Activated T-helper 2 cell treated with anti-CD3 and anti-CD28 coated beads, Interferon-gamma antibody, Interleukin-2, Interleukin-4, amounts not matched to agents 10 μg/mL and 5 μg/mL and 100 μg/mL, durations not matched to agents 14 hours and 24 hours and 36 hours (primary cell): ENCODE measurements at regions of chr5 and their contacts with region 1.

Region 1: DNA sequence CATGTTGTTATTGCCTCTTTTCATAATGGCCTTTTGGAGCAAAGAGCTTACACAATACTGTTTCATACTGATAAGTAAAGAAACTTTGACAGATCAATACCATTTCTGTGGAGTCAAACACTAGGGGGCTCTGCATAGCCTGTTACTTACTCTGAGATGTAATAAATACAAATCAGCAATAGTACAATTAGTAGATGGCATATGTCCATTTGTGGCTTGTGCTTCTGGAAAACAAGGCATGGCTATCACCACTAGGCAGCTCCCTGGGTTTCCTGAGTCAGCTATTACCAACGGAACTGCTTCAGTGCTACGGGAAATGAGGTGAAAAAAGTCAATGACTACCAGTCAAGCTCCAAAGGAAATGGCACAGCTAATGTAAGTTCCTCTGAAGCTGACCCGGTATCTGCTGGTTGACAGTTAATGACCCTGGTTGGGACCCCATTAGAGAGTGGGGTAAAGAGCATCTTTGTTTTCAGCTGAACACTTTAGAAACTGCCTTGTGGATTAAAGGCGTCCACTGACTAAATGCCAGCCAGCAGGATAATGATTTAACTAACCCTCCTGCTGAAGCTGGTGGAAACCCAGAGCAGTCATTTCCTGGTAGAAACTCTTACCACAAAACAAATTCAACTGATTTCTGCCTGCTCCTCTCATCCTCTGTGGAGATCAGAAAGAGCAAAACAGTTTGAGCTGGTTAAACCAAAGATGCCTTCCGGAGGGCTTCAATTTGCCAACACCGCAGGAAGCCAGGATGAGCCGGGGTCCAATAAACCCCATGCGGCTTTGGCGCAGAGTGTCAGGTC is 69.0 kb upstream of the FAM169A start:
- DNase-seq: peak; percentile 11
- H3K4me3 Mint-ChIP-seq: peak overlapping the region; percentile 33
- H3K27ac Mint-ChIP-seq: peak overlapping the region; percentile 48
- H3K4me1 Mint-ChIP-seq: peaks cover 31% of the 10 kb centered on the region
- H3K27me3 Mint-ChIP-seq: peaks cover 25% of the 10 kb centered on the region

Region 2: DNA sequence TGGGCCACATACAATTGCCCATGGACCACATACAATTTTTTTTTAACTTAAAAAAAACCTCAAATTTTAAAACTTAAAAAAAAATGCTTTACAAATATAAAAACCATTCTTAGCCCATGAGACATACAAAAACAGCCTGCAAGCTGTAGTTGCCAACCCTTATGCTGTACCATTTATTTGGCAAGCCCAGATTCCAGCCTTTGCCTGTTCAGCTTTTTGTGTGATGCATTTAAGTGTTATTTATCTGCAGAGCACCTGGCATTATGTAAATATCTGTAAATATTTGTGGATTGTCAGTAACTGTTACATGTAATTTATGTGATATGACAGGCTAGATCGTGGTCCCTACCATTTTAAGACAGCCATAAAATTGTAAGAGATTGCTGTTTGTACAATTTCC is 217.6 kb before region 1 on chr5:
- intact Hi-C with region 1: no loop called
- DNase-seq: no peak
- H3K4me3 Mint-ChIP-seq: no peak overlapping the region
- H3K27ac Mint-ChIP-seq: no peak overlapping the region
- H3K4me1 Mint-ChIP-seq: no peaks in the 10 kb centered on the region
- H3K27me3 Mint-ChIP-seq: no peaks in the 10 kb centered on the region

Region 3: DNA sequence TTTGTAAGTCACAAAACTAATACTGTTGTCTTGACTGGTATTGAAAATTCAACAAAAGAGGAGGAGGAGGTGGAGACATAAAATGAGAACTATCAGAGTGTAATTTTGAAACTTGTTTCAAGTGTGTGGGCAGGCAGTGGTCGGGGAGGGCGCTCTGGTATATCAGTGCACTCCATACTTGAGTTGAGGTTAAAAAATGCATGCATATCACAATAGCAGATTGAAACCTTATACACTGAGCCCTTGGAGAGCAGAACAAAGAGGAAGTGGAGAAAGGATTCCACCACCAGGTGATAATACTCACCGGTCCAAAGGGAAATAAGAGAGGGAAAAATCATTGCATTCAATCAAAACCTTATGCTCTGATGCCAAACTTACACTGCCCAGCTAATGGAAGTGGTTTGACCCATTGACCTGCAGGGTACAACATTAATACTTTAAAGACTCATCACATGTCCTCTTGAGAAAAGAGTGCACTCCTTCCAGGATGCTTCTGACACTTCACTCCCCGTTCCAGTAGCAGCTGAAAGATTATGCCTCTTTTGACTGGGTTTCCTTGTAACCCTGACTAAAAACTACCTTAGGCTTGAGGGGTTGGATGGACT is 10.5 kb after region 1 on chr5:
- intact Hi-C with region 1: loop called (anchors 1 kb)
- DNase-seq: no peak
- H3K4me3 Mint-ChIP-seq: no peak overlapping the region
- H3K27ac Mint-ChIP-seq: no peak overlapping the region
- H3K4me1 Mint-ChIP-seq: peaks cover 8% of the 10 kb centered on the region
- H3K27me3 Mint-ChIP-seq: peaks cover 62% of the 10 kb centered on the region

Region 4: GRCh38 chr5:74963407-74963806 is 28.3 kb after region 1 on chr5:
- intact Hi-C with region 1: no loop called
- DNase-seq: no peak
- H3K4me3 Mint-ChIP-seq: no peak overlapping the region
- H3K27ac Mint-ChIP-seq: no peak overlapping the region
- H3K4me1 Mint-ChIP-seq: no peaks in the 10 kb centered on the region
- H3K27me3 Mint-ChIP-seq: peaks cover 26% of the 10 kb centered on the region

Region 5: DNA sequence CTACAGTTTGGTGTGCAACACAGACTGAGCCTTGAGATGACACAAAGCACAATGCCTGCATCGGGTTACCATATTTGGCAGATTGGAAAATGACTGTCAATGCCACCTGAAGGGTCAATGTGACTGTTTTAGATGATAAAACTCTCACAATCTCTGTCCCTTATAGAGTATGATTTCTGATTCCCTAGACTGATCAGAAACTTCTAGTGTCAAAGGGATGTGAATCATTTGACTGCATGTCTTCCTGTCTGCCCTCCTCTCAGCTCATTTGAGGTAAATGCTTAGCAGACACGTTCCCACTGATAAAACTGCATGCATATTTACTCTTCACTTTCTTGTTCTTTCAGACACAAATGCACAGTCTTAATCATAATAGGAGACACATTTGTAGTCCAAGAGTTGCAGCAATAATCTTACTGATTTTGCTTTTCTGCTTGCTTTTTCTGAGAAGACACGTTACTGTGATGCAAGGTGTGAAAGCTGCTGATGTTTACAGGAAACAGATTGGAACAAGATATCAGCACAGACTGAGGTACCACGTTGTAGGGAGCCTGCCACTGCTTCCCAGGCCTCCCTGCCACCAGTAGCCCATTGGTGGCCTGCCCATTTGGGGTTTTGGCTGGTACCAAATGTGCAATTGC is 39.4 kb after region 1 on chr5:
- intact Hi-C with region 1: loop called (anchors 2 kb)
- DNase-seq: no peak
- H3K4me3 Mint-ChIP-seq: no peak overlapping the region
- H3K27ac Mint-ChIP-seq: peak overlapping the region; percentile 66
- H3K4me1 Mint-ChIP-seq: peaks cover 15% of the 10 kb centered on the region
- H3K27me3 Mint-ChIP-seq: peaks cover 1% of the 10 kb centered on the region

Region 6: DNA sequence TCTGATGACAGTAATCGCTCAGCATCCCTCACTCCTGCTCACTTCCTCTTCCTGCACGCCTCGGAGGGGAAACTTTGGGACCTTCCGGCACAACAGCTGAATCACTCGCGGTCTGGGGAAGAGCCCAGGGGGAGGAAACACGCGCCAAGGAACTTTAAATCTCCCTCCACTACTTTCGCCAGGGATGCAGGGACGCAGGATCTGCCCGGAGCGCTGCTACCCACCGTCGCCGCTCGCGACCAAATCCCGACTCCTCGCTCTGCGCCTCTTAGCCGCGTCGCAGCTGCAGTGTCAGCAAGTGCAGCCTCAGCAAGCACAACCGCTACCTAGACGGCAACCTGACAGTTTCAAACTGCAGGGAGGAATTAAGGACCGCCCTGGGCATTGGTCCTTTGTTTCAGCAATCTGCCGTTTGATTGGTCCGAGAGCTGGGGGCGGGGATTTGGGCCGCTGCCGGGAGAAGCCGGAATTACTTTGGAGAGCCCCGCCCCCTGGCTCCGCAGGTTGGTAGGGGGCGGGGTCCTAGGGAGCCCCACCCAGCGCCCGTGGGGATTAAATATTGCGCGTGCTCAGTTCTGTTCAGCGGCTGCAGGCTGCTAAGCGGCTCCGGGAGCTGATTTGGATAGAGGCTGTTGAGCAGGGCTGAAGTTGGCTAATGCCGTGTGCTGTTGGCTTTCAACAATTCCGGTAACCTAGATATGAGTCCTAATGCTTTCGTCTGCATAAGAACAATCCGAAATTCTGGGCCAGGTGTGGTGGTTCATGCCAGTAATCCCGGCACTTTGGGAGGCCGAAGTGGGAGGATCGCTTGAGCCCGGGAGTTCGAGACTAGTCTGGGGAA is 782.2 kb after region 1 on chr5 and contains the start of gene POC5:
- intact Hi-C with region 1: loop called (anchors 1 kb)
- DNase-seq: peak; percentile 97
- H3K4me3 Mint-ChIP-seq: peak within 1 kb of the TSS; percentile 100
- H3K27ac Mint-ChIP-seq: peak within 1 kb of the TSS; percentile 100
- H3K4me1 Mint-ChIP-seq: peaks cover 29% of the 10 kb centered on the region
- H3K27me3 Mint-ChIP-seq: peaks cover 10% of the 10 kb centered on the region
- total RNA-seq, gene POC5: 16.2 and 16.5 TPM in 2 replicates